Activated B cell treated with CpG ODN at 0.5 μM for 24 hours (primary cell): ENCODE measurements at regions of chr13 and their contacts with region 1.

Region 1: DNA sequence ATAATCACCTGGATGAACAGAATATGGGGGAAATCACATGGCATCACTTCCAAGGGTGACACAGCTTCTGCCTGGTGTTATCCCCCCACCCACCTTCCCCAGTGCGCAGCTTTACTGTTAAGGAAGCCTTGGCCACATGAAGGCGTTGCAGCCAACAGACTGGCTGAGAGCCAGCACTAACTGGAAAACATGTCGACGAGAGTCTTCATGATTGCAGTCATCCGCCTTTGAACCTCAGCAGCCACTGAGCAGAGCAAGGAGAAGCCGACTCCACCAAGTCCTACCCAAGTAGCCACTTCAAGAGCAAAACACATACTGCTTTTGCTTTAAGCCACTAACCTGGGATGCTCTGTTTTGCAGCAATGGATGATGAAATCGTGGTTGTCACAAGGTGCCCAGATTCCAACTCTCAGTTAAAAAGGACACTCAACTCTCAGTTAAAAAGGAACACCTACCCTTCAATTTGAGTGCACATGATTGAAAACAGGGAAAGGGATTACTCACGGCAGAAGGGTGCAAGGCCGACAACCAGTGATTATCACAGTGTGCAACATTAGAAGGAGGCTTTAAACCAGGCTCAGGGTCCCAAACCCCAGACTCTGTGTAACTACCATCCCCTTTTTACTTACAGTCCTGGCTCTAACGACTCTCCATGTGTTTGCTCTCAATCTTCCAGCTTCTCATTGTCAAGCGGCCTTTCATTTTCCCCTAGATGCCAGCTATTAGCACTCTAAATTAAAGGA is 149.1 kb downstream of the KLF12 start:
- DNase-seq: no peak
- ATAC-seq: no peak
- H3K4me3 Mint-ChIP-seq: no peak overlapping the region
- H3K27ac Mint-ChIP-seq: peak overlapping the region; percentile 54
- H3K4me1 Mint-ChIP-seq: peaks cover 32% of the 10 kb centered on the region
- H3K27me3 Mint-ChIP-seq: no peaks in the 10 kb centered on the region
- CTCF ChIP-seq: no peak

Region 2: GRCh38 chr13:72868229-72868628 is 1116.9 kb before region 1 on chr13:
- CTCF ChIA-PET with region 1: no interaction called
- POLR2A ChIA-PET with region 1: no interaction called
- intact Hi-C with region 1: no loop called
- DNase-seq: no peak
- ATAC-seq: no peak
- H3K4me3 Mint-ChIP-seq: no peak overlapping the region
- H3K27ac Mint-ChIP-seq: no peak overlapping the region
- H3K4me1 Mint-ChIP-seq: peaks cover 4% of the 10 kb centered on the region
- H3K27me3 Mint-ChIP-seq: no peaks in the 10 kb centered on the region
- CTCF ChIP-seq: no peak

Region 3: DNA sequence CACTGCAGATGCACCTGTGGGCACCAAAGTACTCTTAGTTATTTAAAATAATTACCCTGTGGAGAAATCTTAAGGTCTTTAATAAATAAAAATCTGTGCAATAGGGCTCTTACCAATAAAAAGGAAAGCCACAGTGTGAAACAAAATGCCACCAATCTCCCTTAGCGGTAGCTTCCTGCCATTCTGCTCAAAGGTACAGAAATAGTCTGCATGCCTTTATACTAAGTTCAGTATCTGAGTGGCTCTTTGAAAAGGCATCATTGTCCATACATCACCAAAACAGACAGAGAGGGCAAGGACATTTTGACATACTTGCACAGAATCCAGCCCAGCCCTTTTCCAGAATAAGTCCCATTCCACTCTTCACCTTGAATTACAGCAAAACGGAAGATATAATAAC is 12.0 kb before region 1 on chr13:
- CTCF ChIA-PET with region 1: no interaction called
- POLR2A ChIA-PET with region 1: interaction called, 3 read pairs
- intact Hi-C with region 1: loop called (anchors 1 kb)
- DNase-seq: no peak
- ATAC-seq: no peak
- H3K4me3 Mint-ChIP-seq: peak overlapping the region; percentile 8
- H3K27ac Mint-ChIP-seq: peak overlapping the region; percentile 13
- H3K4me1 Mint-ChIP-seq: peaks cover 75% of the 10 kb centered on the region
- H3K27me3 Mint-ChIP-seq: no peaks in the 10 kb centered on the region
- CTCF ChIP-seq: no peak

Region 4: DNA sequence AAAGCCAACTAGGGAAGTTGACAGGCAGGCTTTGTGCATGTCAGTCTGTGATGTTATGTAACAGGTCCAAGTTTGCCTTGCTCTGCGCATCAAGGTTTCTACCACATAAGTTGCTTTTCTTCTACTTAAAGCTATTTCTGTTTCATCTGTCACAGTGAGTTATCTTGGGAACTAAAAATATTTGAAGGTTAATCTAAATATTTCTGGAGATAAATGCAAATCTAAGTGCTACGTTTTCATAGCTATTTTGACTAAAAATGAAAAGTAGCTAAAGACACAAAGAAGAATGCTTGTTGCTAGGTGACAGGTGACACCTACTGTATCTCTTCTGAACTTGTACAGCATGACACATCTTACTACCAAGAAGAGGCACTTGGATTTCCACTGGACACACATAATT is 13.5 kb after region 1 on chr13:
- CTCF ChIA-PET with region 1: no interaction called
- POLR2A ChIA-PET with region 1: interaction called, 4 read pairs
- intact Hi-C with region 1: loop called (anchors 2 kb)
- DNase-seq: no peak
- ATAC-seq: peak; percentile 47
- H3K4me3 Mint-ChIP-seq: no peak overlapping the region
- H3K27ac Mint-ChIP-seq: peak overlapping the region; percentile 32
- H3K4me1 Mint-ChIP-seq: peaks cover 43% of the 10 kb centered on the region
- H3K27me3 Mint-ChIP-seq: no peaks in the 10 kb centered on the region
- CTCF ChIP-seq: no peak

Region 5: GRCh38 chr13:74040200-74040599 is 55.1 kb after region 1 on chr13:
- CTCF ChIA-PET with region 1: no interaction called
- POLR2A ChIA-PET with region 1: no interaction called
- intact Hi-C with region 1: no loop called
- DNase-seq: no peak
- ATAC-seq: peak; percentile 80
- H3K4me3 Mint-ChIP-seq: no peak overlapping the region
- H3K27ac Mint-ChIP-seq: no peak overlapping the region
- H3K4me1 Mint-ChIP-seq: peaks cover 55% of the 10 kb centered on the region
- H3K27me3 Mint-ChIP-seq: no peaks in the 10 kb centered on the region
- CTCF ChIP-seq: no peak